Activated B cell treated with CpG ODN at 0.5 μM for 24 hours (primary cell): ENCODE measurements at regions of chr16 and their contacts with region 1.

Region 1: DNA sequence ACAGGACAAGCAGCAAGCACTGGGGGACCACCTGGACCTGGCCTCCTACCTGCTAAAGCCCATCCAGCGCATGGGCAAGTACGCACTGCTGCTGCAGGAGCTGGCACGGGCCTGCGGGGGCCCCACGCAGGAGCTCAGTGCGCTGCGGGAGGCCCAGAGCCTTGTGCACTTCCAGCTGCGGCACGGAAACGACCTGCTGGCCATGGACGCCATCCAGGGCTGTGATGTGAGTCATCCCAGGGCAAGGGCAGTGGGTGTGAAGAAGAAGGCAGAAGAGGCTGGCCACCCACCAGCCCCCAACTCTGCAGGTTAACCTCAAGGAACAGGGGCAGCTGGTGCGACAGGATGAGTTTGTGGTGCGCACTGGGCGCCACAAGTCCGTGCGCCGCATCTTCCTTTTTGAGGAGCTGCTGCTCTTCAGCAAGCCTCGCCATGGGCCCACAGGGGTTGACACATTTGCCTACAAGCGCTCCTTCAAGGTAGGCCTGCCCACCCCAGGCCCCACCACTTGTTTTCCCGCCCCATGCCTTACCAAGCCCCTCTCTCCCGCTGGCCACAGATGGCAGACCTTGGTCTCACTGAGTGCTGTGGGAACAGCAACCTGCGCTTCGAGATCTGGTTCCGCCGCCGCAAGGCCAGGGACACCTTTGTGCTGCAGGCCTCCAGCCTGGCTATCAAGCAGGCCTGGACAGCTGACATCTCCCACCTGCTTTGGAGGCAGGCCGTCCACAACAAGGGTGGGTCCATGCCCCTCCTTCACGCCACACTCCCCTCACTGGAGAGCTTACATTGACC is 7.3 kb downstream of the PLEKHG4 start:
- DNase-seq: no peak
- ATAC-seq: no peak
- H3K4me3 Mint-ChIP-seq: no peak overlapping the region
- H3K27ac Mint-ChIP-seq: no peak overlapping the region
- H3K4me1 Mint-ChIP-seq: no peaks in the 10 kb centered on the region
- H3K27me3 Mint-ChIP-seq: no peaks in the 10 kb centered on the region
- CTCF ChIP-seq: no peak

Region 2: GRCh38 chr16:67384778-67385510 is 98.3 kb after region 1 on chr16:
- CTCF ChIA-PET with region 1: no interaction called
- POLR2A ChIA-PET with region 1: interaction called, 11 read pairs
- intact Hi-C with region 1: no loop called
- DNase-seq: no peak
- ATAC-seq: no peak
- H3K4me3 Mint-ChIP-seq: no peak overlapping the region
- H3K27ac Mint-ChIP-seq: no peak overlapping the region
- H3K4me1 Mint-ChIP-seq: no peaks in the 10 kb centered on the region
- H3K27me3 Mint-ChIP-seq: peaks cover 3% of the 10 kb centered on the region
- CTCF ChIP-seq: no peak